Caco-2 (cell line): ENCODE measurements at regions of chr10 and their contacts with region 1.

Region 1: DNA sequence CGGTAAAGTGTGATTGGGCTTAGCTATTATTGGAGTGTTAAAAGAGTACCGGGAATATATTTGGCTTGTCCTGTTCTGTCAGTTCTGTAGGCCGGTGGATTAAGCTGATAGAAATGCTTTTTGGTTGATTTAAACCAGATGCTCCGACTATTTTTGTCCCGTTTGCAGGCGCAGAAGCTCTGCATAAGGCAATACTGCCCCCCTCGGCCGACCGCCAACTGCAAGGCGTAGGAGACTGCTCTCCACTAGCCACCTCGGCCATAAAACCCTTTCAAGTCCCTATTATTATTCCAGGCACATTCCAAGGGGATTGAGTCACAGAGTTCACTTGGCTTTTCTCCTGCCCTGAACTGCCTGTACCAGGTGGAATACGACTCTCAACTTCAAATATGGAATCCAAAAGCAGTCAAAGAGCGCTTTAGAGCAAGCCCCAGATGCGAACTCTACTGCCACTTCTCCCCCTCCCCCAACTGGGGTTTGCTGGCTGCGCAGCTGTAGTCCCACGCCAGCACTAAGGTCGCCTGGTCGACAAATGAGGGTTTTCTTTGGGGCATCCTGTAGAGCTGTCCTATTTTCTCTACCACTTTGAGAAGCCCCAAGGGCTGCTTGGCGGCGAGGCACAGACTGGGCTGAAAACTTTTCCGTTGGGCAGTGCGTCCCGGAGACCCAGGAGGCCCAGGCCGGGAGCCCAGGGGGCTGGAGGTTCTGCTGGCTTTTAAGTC is 108.3 kb downstream of the REEP3 start:
- DNase-seq: peak; percentile 98
- H3K4me3 ChIP-seq: peak overlapping the region; percentile 64
- H3K4me3 Mint-ChIP-seq: peak overlapping the region; percentile 82
- H3K27ac Mint-ChIP-seq: peak overlapping the region; percentile 95
- H3K4me1 ChIP-seq: peaks cover 44% of the 10 kb centered on the region
- H3K4me1 Mint-ChIP-seq: peaks cover 36% of the 10 kb centered on the region
- H3K27me3 ChIP-seq: no peaks in the 10 kb centered on the region
- H3K27me3 Mint-ChIP-seq: no peaks in the 10 kb centered on the region
- CTCF ChIP-seq: peak; percentile 94 to 99

Region 2: GRCh38 chr10:63217120-63217605 is 412.4 kb before region 1 on chr10:
- CTCF ChIA-PET with region 1: interaction called, 4 read pairs
- POLR2A ChIA-PET with region 1: no interaction called
- intact Hi-C with region 1: loop called (anchors 1 kb)
- DNase-seq: peak in 1 of 2 experiments; percentile 64
- H3K4me3 ChIP-seq: no peak overlapping the region
- H3K4me3 Mint-ChIP-seq: no peak overlapping the region
- H3K27ac Mint-ChIP-seq: no peak overlapping the region
- H3K4me1 ChIP-seq: no peaks in the 10 kb centered on the region; the same call in 1 of the 2 replicates
- H3K4me1 Mint-ChIP-seq: no peaks in the 10 kb centered on the region
- H3K27me3 ChIP-seq: no peaks in the 10 kb centered on the region
- H3K27me3 Mint-ChIP-seq: no peaks in the 10 kb centered on the region
- CTCF ChIP-seq: peak; percentile 74 to 78

Region 3: GRCh38 chr10:63346015-63346441 is 283.5 kb before region 1 on chr10:
- CTCF ChIA-PET with region 1: no interaction called
- POLR2A ChIA-PET with region 1: no interaction called
- intact Hi-C with region 1: loop called (anchors 5 kb)
- DNase-seq: no peak
- H3K4me3 ChIP-seq: no peak overlapping the region
- H3K4me3 Mint-ChIP-seq: no peak overlapping the region
- H3K27ac Mint-ChIP-seq: no peak overlapping the region
- H3K4me1 ChIP-seq: peaks cover 17% of the 10 kb centered on the region
- H3K4me1 Mint-ChIP-seq: peaks cover 13% of the 10 kb centered on the region
- H3K27me3 ChIP-seq: no peaks in the 10 kb centered on the region
- H3K27me3 Mint-ChIP-seq: no peaks in the 10 kb centered on the region
- CTCF ChIP-seq: no peak

Region 4: DNA sequence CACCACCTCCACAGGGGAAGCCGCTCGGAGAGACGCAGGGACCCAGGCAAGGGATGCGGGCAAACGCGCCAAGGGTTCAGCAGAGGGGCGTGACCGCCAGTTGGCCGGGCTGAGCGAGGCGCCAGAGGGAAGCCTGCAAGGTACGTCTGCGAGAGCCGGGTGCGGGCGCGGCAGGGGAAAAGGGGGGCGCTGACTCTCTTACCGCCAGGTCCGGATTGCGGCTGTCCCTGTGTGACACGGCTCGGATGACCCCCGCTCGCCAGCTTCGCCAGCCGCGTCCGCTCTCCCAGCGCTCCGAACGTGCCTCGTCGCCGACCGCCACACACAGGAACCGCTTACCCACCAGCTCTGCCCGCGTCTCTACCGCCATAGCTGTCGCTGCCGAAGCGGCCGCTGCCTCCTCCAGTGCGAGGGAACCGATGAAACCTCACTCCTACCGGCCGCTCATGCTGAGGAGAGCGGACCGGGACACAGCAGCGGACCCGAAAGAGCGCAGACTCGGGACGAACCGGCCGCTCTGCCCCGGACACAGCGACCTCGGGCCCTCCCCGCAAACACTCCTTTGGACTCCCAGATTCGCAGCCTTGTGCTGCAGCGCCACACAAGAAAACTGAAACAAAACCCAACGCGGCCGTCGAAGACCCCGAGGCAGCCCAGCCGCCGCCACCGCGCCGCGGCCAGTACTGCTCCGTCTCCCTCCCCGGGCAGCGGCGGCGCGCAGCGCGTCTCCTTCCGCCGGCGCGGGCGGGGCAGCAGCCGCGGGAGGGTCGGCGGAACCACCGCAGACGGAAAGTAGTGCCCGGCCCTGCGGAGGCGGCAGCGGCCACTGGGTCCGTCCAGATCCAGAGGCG is 164.0 kb before region 1 on chr10 and contains the start of gene JMJD1C:
- CTCF ChIA-PET with region 1: interaction called, 7 read pairs
- POLR2A ChIA-PET with region 1: interaction called, 3 read pairs
- intact Hi-C with region 1: loop called (anchors 1 kb)
- DNase-seq: peak; percentile 89 to 95
- H3K4me3 ChIP-seq: peak within 1 kb of the TSS; percentile 96
- H3K4me3 Mint-ChIP-seq: peak within 1 kb of the TSS; percentile 100
- H3K27ac Mint-ChIP-seq: peak within 1 kb of the TSS; percentile 100
- H3K4me1 ChIP-seq: 0 out of 2 replicates have a peak, but pooled peaks cover 11% of the 10 kb centered on the region
- H3K4me1 Mint-ChIP-seq: peaks cover 44% of the 10 kb centered on the region
- H3K27me3 ChIP-seq: no peaks in the 10 kb centered on the region
- H3K27me3 Mint-ChIP-seq: no peaks in the 10 kb centered on the region
- CTCF ChIP-seq: peak in 1 of 2 experiments; percentile 6
- total RNA-seq, gene JMJD1C: 89.7 and 95.7 TPM in 2 replicates

Region 5: DNA sequence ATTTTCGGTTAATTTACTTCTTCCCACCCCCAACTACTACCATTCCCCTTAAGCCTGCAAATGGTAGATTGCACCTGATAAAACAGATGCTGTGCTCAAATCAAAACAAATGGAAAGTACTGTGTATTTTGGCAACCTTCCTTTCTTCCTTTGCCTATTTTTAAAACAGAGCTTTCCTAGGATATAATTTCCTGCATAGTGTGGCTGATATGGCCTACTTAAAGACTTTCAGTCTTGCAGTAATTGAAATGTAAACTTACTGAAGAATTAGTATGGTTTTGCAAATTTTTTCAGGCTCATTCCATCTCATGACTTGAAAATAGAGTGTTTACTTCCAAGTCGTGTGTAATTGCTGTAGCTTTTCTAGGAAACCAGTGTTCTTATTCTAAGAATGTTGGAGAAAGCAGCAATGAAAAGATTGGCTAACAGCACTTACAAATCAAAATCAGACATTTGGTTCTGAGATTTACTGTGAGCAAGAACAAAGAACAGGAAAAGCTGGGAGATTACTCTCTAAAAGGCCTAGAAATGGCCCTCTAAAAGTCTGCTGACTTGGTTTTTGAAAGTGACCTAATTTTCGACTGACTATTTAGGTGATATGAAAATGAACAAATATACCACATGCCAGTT is 56.3 kb before region 1 on chr10:
- CTCF ChIA-PET with region 1: no interaction called
- POLR2A ChIA-PET with region 1: no interaction called
- intact Hi-C with region 1: no loop called
- DNase-seq: no peak
- H3K4me3 ChIP-seq: no peak overlapping the region
- H3K4me3 Mint-ChIP-seq: no peak overlapping the region
- H3K27ac Mint-ChIP-seq: no peak overlapping the region
- H3K4me1 ChIP-seq: no peaks in the 10 kb centered on the region
- H3K4me1 Mint-ChIP-seq: no peaks in the 10 kb centered on the region
- H3K27me3 ChIP-seq: no peaks in the 10 kb centered on the region
- H3K27me3 Mint-ChIP-seq: no peaks in the 10 kb centered on the region
- CTCF ChIP-seq: no peak

Region 6: GRCh38 chr10:63720072-63720537 is 90.6 kb after region 1 on chr10:
- CTCF ChIA-PET with region 1: interaction called, 22 read pairs
- POLR2A ChIA-PET with region 1: interaction called, 8 read pairs
- intact Hi-C with region 1: loop called (anchors 1 kb)
- DNase-seq: peak; percentile 74 to 84
- H3K4me3 ChIP-seq: no peak overlapping the region
- H3K4me3 Mint-ChIP-seq: no peak overlapping the region
- H3K27ac Mint-ChIP-seq: peak overlapping the region; percentile 26
- H3K4me1 ChIP-seq: peaks cover 31% of the 10 kb centered on the region
- H3K4me1 Mint-ChIP-seq: peaks cover 23% of the 10 kb centered on the region
- H3K27me3 ChIP-seq: no peaks in the 10 kb centered on the region
- H3K27me3 Mint-ChIP-seq: no peaks in the 10 kb centered on the region
- CTCF ChIP-seq: peak; percentile 99

Region 7: GRCh38 chr10:64515970-64516699 is 886.6 kb after region 1 on chr10:
- CTCF ChIA-PET with region 1: no interaction called
- POLR2A ChIA-PET with region 1: no interaction called
- intact Hi-C with region 1: no loop called
- DNase-seq: peak in 1 of 2 experiments; percentile 14
- H3K4me3 ChIP-seq: no peak overlapping the region
- H3K4me3 Mint-ChIP-seq: no peak overlapping the region
- H3K27ac Mint-ChIP-seq: no peak overlapping the region
- H3K4me1 ChIP-seq: no peaks in the 10 kb centered on the region
- H3K4me1 Mint-ChIP-seq: no peaks in the 10 kb centered on the region
- H3K27me3 ChIP-seq: no peaks in the 10 kb centered on the region
- H3K27me3 Mint-ChIP-seq: peaks cover 6% of the 10 kb centered on the region
- CTCF ChIP-seq: no peak